ENCODE measurements at regions of chr20 and their contacts with region 1.

Region 1: GRCh38 chr20:46349035-46349741 is 40.9 kb upstream of the CDH22 start:
- DNase-seq: peak in 1 of 2 donors; percentile 66
- ATAC-seq: peak; percentile 68
- H3K4me3 ChIP-seq: no peak overlapping the region
- H3K27ac ChIP-seq: no peak overlapping the region
- H3K4me1 ChIP-seq: no peaks in the 10 kb centered on the region
- H3K27me3 ChIP-seq: no peaks in the 10 kb centered on the region

Region 2: GRCh38 chr20:46132705-46133120 is 216.5 kb before region 1 on chr20:
- intact Hi-C with region 1: loop called in 1 of 2 experiments (anchors 5 kb)
- DNase-seq: peak; percentile 73 to 89
- ATAC-seq: peak; percentile 83
- H3K4me3 ChIP-seq: no peak overlapping the region
- H3K27ac ChIP-seq: no peak overlapping the region
- H3K4me1 ChIP-seq: no peaks in the 10 kb centered on the region
- H3K27me3 ChIP-seq: no peaks in the 10 kb centered on the region

Region 3: GRCh38 chr20:46255429-46256104 is 93.6 kb before region 1 on chr20:
- intact Hi-C with region 1: no loop called
- DNase-seq: peak; percentile 58 to 84
- ATAC-seq: peak; percentile 39
- H3K4me3 ChIP-seq: no peak overlapping the region
- H3K27ac ChIP-seq: no peak overlapping the region
- H3K4me1 ChIP-seq: no peaks in the 10 kb centered on the region
- H3K27me3 ChIP-seq: no peaks in the 10 kb centered on the region

Measured in aorta (tissue), 5 donors.